Vagina (tissue), 2 donors: ENCODE measurements at regions of chr3 and their contacts with region 1.

Region 1: DNA sequence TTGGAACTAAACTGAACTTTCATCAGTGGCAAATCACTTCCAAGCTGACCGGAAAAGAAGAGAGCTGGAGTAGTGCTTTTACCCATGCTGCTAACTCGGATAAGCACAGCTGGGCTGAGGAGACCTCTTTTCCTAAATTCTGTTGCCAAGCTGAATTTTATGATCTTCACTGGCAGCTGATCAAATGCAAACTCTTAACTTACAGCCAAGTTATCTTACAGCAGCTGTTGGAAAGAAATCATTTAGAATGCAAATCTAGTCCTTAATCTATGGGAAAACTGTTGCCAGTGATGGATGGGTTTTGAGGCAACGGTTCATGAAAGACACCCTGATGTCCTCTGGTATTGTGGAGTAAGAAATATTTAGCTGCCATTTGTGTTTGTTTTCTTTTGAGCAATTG is 216.5 kb downstream of the ZNF385D start:
- DNase-seq: no peak
- H3K4me3 ChIP-seq: no peak overlapping the region
- H3K27ac ChIP-seq: no peak overlapping the region
- H3K4me1 ChIP-seq: no peaks in the 10 kb centered on the region
- H3K27me3 ChIP-seq: no peaks in the 10 kb centered on the region
- CTCF ChIP-seq: no peak
- POLR2A ChIP-seq: no peak

Region 2: GRCh38 chr3:21509731-21510470 is 24.6 kb before region 1 on chr3:
- intact Hi-C with region 1: loop called (anchors 2 kb)
- DNase-seq: no peak
- H3K4me3 ChIP-seq: no peak overlapping the region
- H3K27ac ChIP-seq: no peak overlapping the region
- H3K4me1 ChIP-seq: no peaks in the 10 kb centered on the region
- H3K27me3 ChIP-seq: no peaks in the 10 kb centered on the region
- CTCF ChIP-seq: no peak
- POLR2A ChIP-seq: no peak